ENCODE measurements at regions of chr20 and their contacts with region 1.

Region 1: GRCh38 chr20:62065669-62066338 is at the start of gene TAF4:
- DNase-seq: peak; percentile 73 to 88 (median 83)
- H3K4me3 ChIP-seq: peak within 1 kb of the TSS; percentile 5 to 76
- H3K4me3 Mint-ChIP-seq: peak within 1 kb of the TSS; percentile 86 to 94 (median 89)
- H3K27ac ChIP-seq: peak within 1 kb of the TSS; percentile 70
- H3K27ac Mint-ChIP-seq: peak within 1 kb of the TSS; percentile 85 to 94 (median 92)
- H3K4me1 ChIP-seq: peaks cover 48% of the 10 kb centered on the region
- H3K4me1 Mint-ChIP-seq: peaks cover 31 to 59% (median 46%) of the 10 kb centered on the region in 4 donors
- H3K27me3 ChIP-seq: no peaks in the 10 kb centered on the region
- H3K27me3 Mint-ChIP-seq: no peaks in the 10 kb centered on the region
- total RNA-seq, gene TAF4: 32.7 to 33.1 TPM

Region 2: GRCh38 chr20:62010551-62011402 is 55.0 kb before region 1 on chr20:
- CTCF ChIA-PET with region 1: interaction called, 4 read pairs
- POLR2A ChIA-PET with region 1: interaction called, 18 read pairs
- intact Hi-C with region 1: loop called (anchors 5 kb)
- DNase-seq: peak; percentile 63 to 70 (median 68)
- H3K4me3 ChIP-seq: no peak overlapping the region
- H3K4me3 Mint-ChIP-seq: peak overlapping the region in 1 of 8 donors; percentile 3
- H3K27ac ChIP-seq: no peak overlapping the region
- H3K27ac Mint-ChIP-seq: peak overlapping the region in 5 of 7 donors; percentile 4 to 76 (median 51)
- H3K4me1 ChIP-seq: no peaks in the 10 kb centered on the region
- H3K4me1 Mint-ChIP-seq: peaks cover 7 to 14% (median 9%) of the 10 kb centered on the region in 4 donors
- H3K27me3 ChIP-seq: no peaks in the 10 kb centered on the region
- H3K27me3 Mint-ChIP-seq: no peaks in the 10 kb centered on the region

Region 3: DNA sequence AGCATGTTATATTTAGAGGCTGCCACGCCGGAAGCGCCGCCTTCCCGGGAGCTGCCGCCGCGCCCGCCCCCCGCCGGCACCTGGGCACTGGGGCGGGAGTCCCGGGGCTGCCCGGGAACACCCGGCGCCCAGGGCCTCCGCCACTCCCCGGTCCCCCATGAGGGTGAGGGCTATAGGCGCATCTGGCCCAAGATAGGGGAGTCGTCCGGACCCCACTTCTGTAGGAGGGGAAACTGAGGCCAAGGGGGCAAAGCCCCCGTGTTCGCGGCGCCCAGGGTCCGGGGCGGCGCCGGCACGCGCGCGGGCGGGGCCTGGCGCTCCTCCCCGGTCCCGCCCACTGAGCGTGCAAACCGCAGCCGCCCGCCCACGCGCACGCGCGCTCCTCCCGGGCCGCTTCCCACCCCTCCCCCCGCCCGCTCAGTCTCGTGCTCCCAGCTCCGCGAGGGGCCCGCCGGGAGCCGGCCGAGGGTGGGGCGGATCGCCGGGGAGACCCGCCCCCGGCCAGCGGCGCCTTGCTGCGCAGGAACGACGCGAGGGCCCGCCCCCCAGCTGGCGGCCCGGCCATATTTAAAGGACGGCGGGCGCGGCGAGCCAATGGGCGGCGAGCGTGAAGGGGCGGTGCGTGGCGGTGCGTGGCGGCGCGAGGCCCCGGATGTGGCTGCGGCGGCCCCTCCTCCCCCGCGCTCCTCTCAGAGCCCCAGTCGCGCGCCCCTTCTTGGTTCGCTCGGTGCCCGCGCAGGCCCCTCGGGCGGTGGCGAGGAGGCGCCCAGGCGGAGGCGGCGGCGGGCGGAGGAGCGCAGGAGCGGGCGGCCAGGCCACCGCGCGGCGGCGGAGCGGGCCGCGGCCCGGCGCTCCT is 56.2 kb after region 1 on chr20 and contains the start of gene LSM14B:
- CTCF ChIA-PET with region 1: interaction called, 4 read pairs
- POLR2A ChIA-PET with region 1: interaction called, 130 read pairs
- intact Hi-C with region 1: loop called (anchors 1 kb)
- DNase-seq: peak; percentile 93 to 98 (median 97)
- H3K4me3 ChIP-seq: peak within 1 kb of the TSS; percentile 61 to 73
- H3K4me3 Mint-ChIP-seq: peak within 1 kb of the TSS; percentile 90 to 95 (median 92)
- H3K27ac ChIP-seq: peak within 1 kb of the TSS; percentile 76
- H3K27ac Mint-ChIP-seq: peak within 1 kb of the TSS; percentile 93 to 99 (median 97)
- H3K4me1 ChIP-seq: peaks cover 48% of the 10 kb centered on the region
- H3K4me1 Mint-ChIP-seq: peaks cover 32 to 71% (median 49%) of the 10 kb centered on the region in 4 donors
- H3K27me3 ChIP-seq: no peaks in the 10 kb centered on the region
- H3K27me3 Mint-ChIP-seq: no peaks in the 10 kb centered on the region
- total RNA-seq, gene LSM14B: 48.5 to 50.3 TPM

Region 4: DNA sequence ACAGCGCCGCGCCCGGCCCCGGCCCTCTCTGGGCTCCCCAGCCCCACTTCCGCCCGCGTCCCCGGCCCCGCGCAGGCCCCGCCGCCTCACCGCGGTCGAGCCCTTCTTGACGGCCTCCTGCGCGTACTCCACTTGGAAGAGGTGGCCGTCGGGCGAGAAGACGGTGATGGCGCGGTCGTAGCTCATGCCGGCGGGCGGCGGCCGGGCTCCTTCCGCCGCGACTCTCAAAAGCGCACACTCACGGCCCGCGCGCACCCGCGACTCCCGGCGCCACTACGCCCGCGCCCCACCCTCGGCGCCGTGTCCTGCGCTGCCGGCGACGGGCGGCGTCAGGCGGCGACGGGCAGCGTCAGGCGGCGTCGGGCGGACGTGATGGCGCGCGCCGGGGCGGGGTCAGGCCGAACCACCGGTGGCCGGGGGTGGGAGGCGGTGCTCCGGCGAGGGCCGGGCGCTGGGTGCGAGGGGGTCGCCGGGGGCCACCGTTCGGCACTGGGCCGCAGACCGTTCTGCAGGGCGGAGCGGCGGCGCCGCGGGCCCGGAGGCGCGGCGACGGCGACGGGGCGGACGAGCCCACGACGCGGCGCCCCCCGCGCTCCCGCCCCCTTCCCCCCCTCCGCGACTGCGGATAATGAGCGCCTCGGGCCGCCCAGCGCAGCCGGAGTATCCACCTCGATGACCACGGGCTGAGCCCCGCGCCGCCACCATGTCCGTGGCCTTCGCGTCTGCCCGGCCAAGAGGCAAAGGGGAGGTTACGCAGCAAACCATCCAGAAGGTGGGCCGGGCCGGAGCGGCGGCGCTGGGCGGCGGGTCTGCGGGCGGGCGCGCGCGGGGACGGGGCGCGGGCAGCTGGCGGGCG is 77.5 kb after region 1 on chr20 and contains the starts of genes PSMA7 and SS18L1:
- CTCF ChIA-PET with region 1: interaction called, 5 read pairs
- POLR2A ChIA-PET with region 1: interaction called, 64 read pairs
- intact Hi-C with region 1: no loop called
- DNase-seq: peak; percentile 81 to 90 (median 89)
- H3K4me3 ChIP-seq: peak within 1 kb of the TSS; percentile 17 to 62
- H3K4me3 Mint-ChIP-seq: peak within 1 kb of the TSS; percentile 91 to 98 (median 92)
- H3K27ac ChIP-seq: peak within 1 kb of the TSS; percentile 66
- H3K27ac Mint-ChIP-seq: peak within 1 kb of the TSS; percentile 94 to 96 (median 96)
- H3K4me1 ChIP-seq: peaks cover 41% of the 10 kb centered on the region
- H3K4me1 Mint-ChIP-seq: peaks cover 35 to 61% (median 48%) of the 10 kb centered on the region in 4 donors
- H3K27me3 ChIP-seq: no peaks in the 10 kb centered on the region
- H3K27me3 Mint-ChIP-seq: no peaks in the 10 kb centered on the region
- total RNA-seq, gene PSMA7: 182 to 190 TPM
- total RNA-seq, gene SS18L1: 22.7 to 24.8 TPM

Region 5: DNA sequence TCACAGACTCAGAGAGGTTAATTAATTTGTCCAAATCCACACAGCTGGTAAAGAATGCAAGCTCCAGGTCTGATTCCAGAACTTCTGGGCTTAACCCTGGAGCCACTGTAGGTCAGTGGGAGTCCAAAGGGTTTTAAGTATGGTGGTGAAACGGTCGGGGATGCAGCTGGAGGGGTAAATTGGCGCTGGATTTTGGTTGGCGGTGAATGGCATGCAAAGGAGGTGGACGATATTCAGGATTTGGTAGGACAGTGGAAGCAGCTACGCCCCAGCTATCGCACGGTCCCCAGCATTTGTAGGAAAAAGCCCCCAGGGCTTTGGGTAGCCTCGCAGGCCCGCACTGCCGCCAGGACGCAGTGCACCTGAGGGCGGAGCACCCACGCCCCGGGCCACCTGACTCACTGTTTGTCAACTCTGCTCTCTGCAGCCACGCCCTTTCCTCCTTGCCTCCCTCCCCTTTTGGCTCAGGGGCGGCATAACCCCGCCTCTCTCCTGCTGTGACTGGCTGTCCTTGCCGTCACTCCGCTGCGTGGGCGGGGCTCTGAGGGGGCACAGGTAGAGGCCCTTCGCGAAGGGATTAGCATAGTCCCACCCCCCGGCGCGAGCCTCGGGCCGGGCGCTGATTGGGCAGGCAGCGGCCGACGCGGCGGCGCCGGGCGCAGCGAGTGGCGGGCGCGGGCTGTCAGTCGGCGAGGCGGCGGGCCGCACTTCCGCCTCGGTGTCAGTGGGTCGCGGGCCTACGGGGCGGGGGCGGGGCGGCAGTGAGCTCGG is 172.2 kb after region 1 on chr20 and contains the start of gene OSBPL2:
- CTCF ChIA-PET with region 1: no interaction called
- POLR2A ChIA-PET with region 1: interaction called, 10 read pairs
- intact Hi-C with region 1: loop called (anchors 5 kb)
- DNase-seq: peak; percentile 100
- H3K4me3 ChIP-seq: peak within 1 kb of the TSS; percentile 62 to 65
- H3K4me3 Mint-ChIP-seq: peak within 1 kb of the TSS; percentile 82 to 88 (median 86)
- H3K27ac ChIP-seq: peak within 1 kb of the TSS; percentile 69
- H3K27ac Mint-ChIP-seq: peak within 1 kb of the TSS; percentile 84 to 97 (median 95)
- H3K4me1 ChIP-seq: peaks cover 38% of the 10 kb centered on the region
- H3K4me1 Mint-ChIP-seq: peaks cover 26 to 51% (median 39%) of the 10 kb centered on the region in 4 donors
- H3K27me3 ChIP-seq: no peaks in the 10 kb centered on the region
- H3K27me3 Mint-ChIP-seq: peaks cover 0 to 7% of the 10 kb centered on the region in 2 donors
- total RNA-seq, gene OSBPL2: 76.2 to 84.4 TPM

Measured in CD4-positive, alpha-beta memory T cell (primary cell).